MCF 10A (cell line): ENCODE measurements at regions of chr13 and their contacts with region 1.

Region 1: GRCh38 chr13:101785858-101786257 is 333.4 kb downstream of the ITGBL1 start:
- DNase-seq: peak; percentile 54
- H3K4me3 Mint-ChIP-seq: no peak overlapping the region
- H3K27ac Mint-ChIP-seq: no peak overlapping the region
- H3K4me1 Mint-ChIP-seq: no peaks in the 10 kb centered on the region
- H3K27me3 Mint-ChIP-seq: peaks cover 95% of the 10 kb centered on the region
- CTCF ChIP-seq: peak; percentile 35

Region 2: DNA sequence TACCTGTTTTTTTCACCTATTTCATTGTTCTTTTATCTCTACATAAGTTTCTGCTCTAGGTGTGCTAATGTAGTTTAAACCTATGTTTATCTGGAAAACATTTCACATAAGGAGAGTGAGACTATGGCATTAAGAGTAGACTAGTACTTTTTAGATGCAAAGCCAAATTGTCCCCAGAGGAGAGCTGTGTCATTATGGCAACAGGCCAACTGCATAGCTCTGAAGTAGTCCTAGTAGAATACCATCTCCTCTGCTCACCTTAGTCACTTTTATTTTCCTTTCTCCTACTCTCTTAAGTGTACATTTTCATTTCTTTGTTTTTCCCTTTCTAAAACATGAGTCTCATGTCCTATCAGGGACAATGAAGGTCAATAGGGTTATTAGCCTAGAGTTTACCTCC is 210.3 kb before region 1 on chr13:
- CTCF ChIA-PET with region 1: no interaction called
- POLR2A ChIA-PET with region 1: no interaction called
- intact Hi-C with region 1: no loop called
- DNase-seq: peak; percentile 22
- H3K4me3 Mint-ChIP-seq: no peak overlapping the region
- H3K27ac Mint-ChIP-seq: no peak overlapping the region
- H3K4me1 Mint-ChIP-seq: peaks cover 15% of the 10 kb centered on the region
- H3K27me3 Mint-ChIP-seq: no peaks in the 10 kb centered on the region
- CTCF ChIP-seq: no peak

Region 3: DNA sequence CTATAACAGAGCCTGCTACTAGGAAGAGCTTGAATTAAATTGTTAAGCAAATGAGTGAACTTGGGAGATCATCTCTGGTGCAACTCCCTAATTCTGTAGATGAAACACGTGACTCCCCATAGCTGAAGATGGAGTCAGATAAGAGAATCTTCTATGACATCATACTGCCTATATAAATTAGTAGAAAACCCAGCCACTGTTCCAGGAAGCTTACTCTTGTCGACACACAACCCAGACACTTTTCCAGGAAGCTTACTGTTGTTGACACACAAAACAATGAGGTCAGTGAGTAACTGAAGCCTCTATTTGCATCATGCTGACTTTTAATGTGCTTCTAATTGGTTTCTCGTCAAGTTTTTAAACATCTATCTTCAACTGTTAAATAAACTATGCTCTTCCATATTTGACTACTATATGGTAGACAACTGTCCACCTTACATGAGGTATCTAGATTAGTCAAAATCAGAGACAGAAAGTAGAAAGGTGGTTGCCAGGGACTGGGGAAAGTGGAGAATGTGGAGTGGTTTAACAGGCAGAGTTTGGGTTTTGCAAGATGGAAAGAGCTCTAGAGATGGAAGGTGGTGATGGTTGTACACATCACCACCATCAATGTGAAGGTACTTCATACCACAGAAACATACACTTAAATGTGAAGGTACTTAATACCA is 447.8 kb after region 1 on chr13:
- CTCF ChIA-PET with region 1: no interaction called
- POLR2A ChIA-PET with region 1: no interaction called
- intact Hi-C with region 1: no loop called
- DNase-seq: no peak
- H3K4me3 Mint-ChIP-seq: no peak overlapping the region
- H3K27ac Mint-ChIP-seq: no peak overlapping the region
- H3K4me1 Mint-ChIP-seq: peaks cover 20% of the 10 kb centered on the region
- H3K27me3 Mint-ChIP-seq: no peaks in the 10 kb centered on the region
- CTCF ChIP-seq: no peak

Region 4: DNA sequence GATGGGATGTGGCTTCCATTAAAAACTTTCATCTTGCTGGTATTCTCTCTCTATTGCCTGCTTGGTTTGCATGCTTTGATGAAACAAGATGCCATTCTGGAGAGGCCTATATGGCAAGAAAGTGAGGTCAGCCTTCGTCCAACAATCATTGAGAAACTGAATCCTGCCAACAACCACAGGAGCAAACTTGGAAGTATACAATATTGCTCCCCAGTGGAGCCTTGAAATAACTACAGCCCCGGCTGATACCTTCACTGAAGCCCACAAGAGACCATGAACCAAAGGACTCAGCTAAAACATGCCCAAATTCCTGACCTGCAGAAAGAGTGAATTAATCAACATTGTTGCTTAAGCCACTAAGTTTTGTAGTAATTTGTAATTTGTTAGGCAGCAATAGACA is 698.5 kb after region 1 on chr13:
- CTCF ChIA-PET with region 1: no interaction called
- POLR2A ChIA-PET with region 1: no interaction called
- intact Hi-C with region 1: loop called (anchors 10 kb)
- DNase-seq: peak; percentile 38
- H3K4me3 Mint-ChIP-seq: no peak overlapping the region
- H3K27ac Mint-ChIP-seq: no peak overlapping the region
- H3K4me1 Mint-ChIP-seq: no peaks in the 10 kb centered on the region
- H3K27me3 Mint-ChIP-seq: no peaks in the 10 kb centered on the region
- CTCF ChIP-seq: peak; percentile 21